Naive thymus-derived CD4-positive, alpha-beta T cell (primary cell): ENCODE measurements at regions of chr4 and their contacts with region 1.

Region 1: DNA sequence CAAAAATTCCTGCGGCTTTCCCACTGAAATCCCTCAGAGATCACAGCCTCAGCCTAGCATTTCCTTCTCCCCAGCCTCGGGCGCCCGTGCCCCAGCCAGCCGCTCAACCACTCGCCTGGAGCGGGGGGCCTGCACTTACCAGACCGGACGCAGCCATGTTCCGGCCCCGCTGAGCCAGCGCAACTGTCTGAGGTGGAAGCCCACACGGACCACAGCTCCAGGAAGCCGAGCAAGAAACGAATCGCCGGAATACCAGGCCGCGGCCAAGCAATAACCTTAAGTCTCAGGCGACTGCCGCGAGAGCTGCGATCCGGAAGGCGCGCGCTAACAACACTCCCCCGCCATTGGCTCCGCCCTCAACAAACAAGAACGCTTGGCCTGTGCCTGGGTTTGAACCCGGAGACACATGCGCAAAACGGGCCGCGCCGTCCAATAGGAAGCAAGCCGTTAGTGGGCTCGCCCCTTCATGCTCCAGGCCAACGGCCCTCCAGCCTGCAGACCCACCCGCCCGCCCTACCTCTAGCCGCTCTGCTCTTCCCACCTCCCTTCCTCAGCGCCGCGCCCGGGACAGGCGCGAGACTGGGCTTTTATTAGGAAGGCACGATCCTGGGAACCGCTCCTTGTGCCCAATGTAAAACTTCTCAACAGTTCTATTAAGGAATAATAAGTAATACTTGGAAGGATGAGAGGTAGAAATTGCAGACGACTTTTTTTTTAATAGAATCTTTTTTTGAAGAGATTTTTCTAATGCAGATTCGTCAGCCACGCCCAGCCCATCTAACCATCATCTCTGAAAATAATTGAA is at the start of gene CENPC:
- DNase-seq: peak; percentile 74 to 91 (median 87)
- ATAC-seq: peak; percentile 94
- H3K4me3 ChIP-seq: peak within 1 kb of the TSS; percentile 94
- H3K4me3 Mint-ChIP-seq: peak within 1 kb of the TSS; percentile 92 to 100 (median 98)
- H3K27ac ChIP-seq: peak within 1 kb of the TSS; percentile 98
- H3K27ac Mint-ChIP-seq: peak within 1 kb of the TSS; percentile 98 to 100 (median 100)
- H3K4me1 ChIP-seq: peaks cover 5 to 24% of the 10 kb centered on the region in 2 donors
- H3K4me1 Mint-ChIP-seq: peaks cover 16 to 60% (median 41%) of the 10 kb centered on the region in 7 donors
- H3K27me3 ChIP-seq: no peaks in the 10 kb centered on the region
- H3K27me3 Mint-ChIP-seq: no peaks in the 10 kb centered on the region
- total RNA-seq, gene CENPC: 33.9 to 89.7 (median 63.8) TPM

Region 2: GRCh38 chr4:67160394-67160793 is 385.0 kb before region 1 on chr4:
- CTCF ChIA-PET with region 1: no interaction called
- POLR2A ChIA-PET with region 1: no interaction called
- intact Hi-C with region 1: no loop called
- DNase-seq: no peak
- ATAC-seq: peak; percentile 74
- H3K4me3 ChIP-seq: no peak overlapping the region
- H3K4me3 Mint-ChIP-seq: no peak overlapping the region
- H3K27ac ChIP-seq: no peak overlapping the region
- H3K27ac Mint-ChIP-seq: no peak overlapping the region
- H3K4me1 ChIP-seq: no peaks in the 10 kb centered on the region
- H3K4me1 Mint-ChIP-seq: no peaks in the 10 kb centered on the region
- H3K27me3 ChIP-seq: no peaks in the 10 kb centered on the region
- H3K27me3 Mint-ChIP-seq: no peaks in the 10 kb centered on the region

Region 3: DNA sequence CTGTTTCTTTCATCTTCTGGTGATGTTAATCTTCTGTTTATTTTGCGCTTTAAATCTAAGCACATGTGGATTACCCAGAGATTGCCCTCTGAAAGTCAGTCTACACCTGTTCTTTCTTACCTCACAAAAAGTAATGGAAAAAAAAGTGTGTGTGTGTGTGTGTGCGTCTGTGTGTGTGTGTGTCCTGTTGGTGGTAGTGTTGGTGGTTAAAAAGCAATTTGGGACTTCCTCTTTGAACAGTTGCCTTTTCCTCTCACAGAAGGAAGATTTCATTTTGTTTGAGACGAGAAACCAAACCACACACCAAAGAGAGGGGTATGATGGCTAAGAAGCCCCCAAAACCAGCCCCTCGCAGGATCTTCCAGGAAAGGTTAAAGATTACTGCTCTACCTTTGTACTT is 13.1 kb after region 1 on chr4 and contains the start of gene STAP1:
- CTCF ChIA-PET with region 1: no interaction called
- POLR2A ChIA-PET with region 1: interaction called, 7 read pairs
- intact Hi-C with region 1: loop called (anchors 1 kb)
- DNase-seq: peak in 7 of 9 donors; percentile 54 to 80 (median 68)
- ATAC-seq: peak; percentile 79
- H3K4me3 ChIP-seq: peak within 1 kb of the TSS; percentile 54
- H3K4me3 Mint-ChIP-seq: peak within 1 kb of the TSS; percentile 74 to 93 (median 86)
- H3K27ac ChIP-seq: peak within 1 kb of the TSS; percentile 59
- H3K27ac Mint-ChIP-seq: peak within 1 kb of the TSS; percentile 82 to 95 (median 91)
- H3K4me1 ChIP-seq: peaks cover 3 to 12% of the 10 kb centered on the region in 2 donors
- H3K4me1 Mint-ChIP-seq: peaks cover 13 to 82% (median 52%) of the 10 kb centered on the region in 7 donors
- H3K27me3 ChIP-seq: no peaks in the 10 kb centered on the region
- H3K27me3 Mint-ChIP-seq: no peaks in the 10 kb centered on the region
- total RNA-seq, gene STAP1: 3.3 to 39.1 (median 15.0) TPM

Region 4: DNA sequence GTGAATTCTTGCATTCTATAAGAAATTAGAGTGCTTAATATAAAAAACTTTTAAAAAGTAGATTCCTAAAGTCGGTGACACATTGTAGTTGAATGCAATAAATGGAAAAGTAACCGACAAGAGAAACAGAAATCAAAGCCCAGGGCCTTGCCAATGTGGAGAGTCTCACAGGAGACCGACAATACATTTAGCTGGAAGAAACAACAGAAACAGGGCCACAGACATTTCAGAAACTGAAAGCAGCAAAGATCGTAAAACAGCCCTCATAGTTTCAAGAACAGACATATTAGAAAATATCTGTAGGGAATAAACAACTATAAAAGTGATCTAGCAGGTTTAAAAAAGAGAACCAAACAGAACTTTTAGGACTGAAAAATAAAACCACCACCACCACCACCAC is 62.6 kb after region 1 on chr4:
- CTCF ChIA-PET with region 1: no interaction called
- POLR2A ChIA-PET with region 1: no interaction called
- intact Hi-C with region 1: no loop called
- DNase-seq: no peak
- ATAC-seq: no peak
- H3K4me3 ChIP-seq: no peak overlapping the region
- H3K4me3 Mint-ChIP-seq: peak overlapping the region in 4 of 10 donors; percentile 5 to 19 (median 12)
- H3K27ac ChIP-seq: no peak overlapping the region
- H3K27ac Mint-ChIP-seq: peak overlapping the region in 3 of 9 donors; percentile 28 to 70 (median 31)
- H3K4me1 ChIP-seq: no peaks in the 10 kb centered on the region
- H3K4me1 Mint-ChIP-seq: peaks cover 0 to 7% (median 0%) of the 10 kb centered on the region in 7 donors
- H3K27me3 ChIP-seq: no peaks in the 10 kb centered on the region
- H3K27me3 Mint-ChIP-seq: no peaks in the 10 kb centered on the region

Region 5: GRCh38 chr4:67624939-67625338 is 79.5 kb after region 1 on chr4:
- CTCF ChIA-PET with region 1: interaction called, 11 read pairs
- POLR2A ChIA-PET with region 1: no interaction called
- intact Hi-C with region 1: loop called in 1 of 2 experiments (anchors 1 kb)
- DNase-seq: peak in 2 of 9 donors; percentile 6 to 8
- ATAC-seq: no peak
- H3K4me3 ChIP-seq: no peak overlapping the region
- H3K4me3 Mint-ChIP-seq: no peak overlapping the region
- H3K27ac ChIP-seq: no peak overlapping the region
- H3K27ac Mint-ChIP-seq: no peak overlapping the region
- H3K4me1 ChIP-seq: no peaks in the 10 kb centered on the region
- H3K4me1 Mint-ChIP-seq: no peaks in the 10 kb centered on the region
- H3K27me3 ChIP-seq: no peaks in the 10 kb centered on the region
- H3K27me3 Mint-ChIP-seq: no peaks in the 10 kb centered on the region

Region 6: GRCh38 chr4:67700738-67701516 is 155.5 kb after region 1 on chr4 and contains the start of gene UBA6:
- CTCF ChIA-PET with region 1: interaction called, 3 read pairs
- POLR2A ChIA-PET with region 1: interaction called, 29 read pairs
- intact Hi-C with region 1: loop called (anchors 1 kb)
- DNase-seq: peak; percentile 80 to 94 (median 91)
- ATAC-seq: peak; percentile 99
- H3K4me3 ChIP-seq: peak within 1 kb of the TSS; percentile 73
- H3K4me3 Mint-ChIP-seq: peak within 1 kb of the TSS; percentile 91 to 100 (median 97)
- H3K27ac ChIP-seq: peak within 1 kb of the TSS; percentile 85
- H3K27ac Mint-ChIP-seq: peak within 1 kb of the TSS; percentile 92 to 100 (median 96)
- H3K4me1 ChIP-seq: peaks cover 10 to 16% of the 10 kb centered on the region in 2 donors
- H3K4me1 Mint-ChIP-seq: peaks cover 47 to 86% (median 75%) of the 10 kb centered on the region in 7 donors
- H3K27me3 ChIP-seq: no peaks in the 10 kb centered on the region
- H3K27me3 Mint-ChIP-seq: no peaks in the 10 kb centered on the region
- total RNA-seq, gene UBA6: 35.5 to 84.4 (median 43.9) TPM

Region 7: DNA sequence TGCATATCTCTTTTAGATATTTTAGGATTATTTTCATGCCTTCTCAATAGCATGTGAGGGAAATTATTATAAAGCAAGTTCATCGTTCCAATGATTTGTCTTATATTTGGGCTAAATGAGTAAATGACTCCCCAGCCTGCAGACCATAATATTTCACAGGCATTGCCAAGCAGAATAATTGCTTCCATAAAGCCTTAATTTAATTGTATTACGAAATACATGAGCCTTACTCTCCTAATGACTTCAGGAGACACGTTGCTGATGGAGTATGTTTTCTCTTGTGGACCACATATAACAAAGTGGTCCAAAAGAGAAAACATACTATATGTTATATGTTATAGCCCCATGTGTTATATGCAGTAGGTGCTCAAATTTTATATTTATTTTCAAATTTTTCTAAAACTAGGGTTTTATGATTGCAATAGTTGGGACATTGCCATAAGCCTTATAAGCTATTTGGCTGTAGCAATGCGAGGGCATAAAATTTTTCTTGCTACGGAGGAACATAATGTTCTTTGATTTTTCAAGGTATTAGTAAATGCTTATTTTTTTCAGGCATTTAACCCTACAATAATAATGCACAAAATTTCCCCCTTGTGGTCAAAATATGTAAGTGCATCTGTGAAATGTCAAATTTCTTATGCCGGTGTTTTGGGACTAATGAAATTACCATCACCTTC is 364.6 kb after region 1 on chr4:
- CTCF ChIA-PET with region 1: interaction called, 3 read pairs
- POLR2A ChIA-PET with region 1: no interaction called
- intact Hi-C with region 1: loop called (anchors 1 kb)
- DNase-seq: peak in 5 of 9 donors; percentile 7 to 18 (median 13)
- ATAC-seq: no peak
- H3K4me3 ChIP-seq: no peak overlapping the region
- H3K4me3 Mint-ChIP-seq: no peak overlapping the region
- H3K27ac ChIP-seq: no peak overlapping the region
- H3K27ac Mint-ChIP-seq: no peak overlapping the region
- H3K4me1 ChIP-seq: no peaks in the 10 kb centered on the region
- H3K4me1 Mint-ChIP-seq: peaks cover 0 to 2% (median 0%) of the 10 kb centered on the region in 7 donors
- H3K27me3 ChIP-seq: no peaks in the 10 kb centered on the region
- H3K27me3 Mint-ChIP-seq: peaks cover 3 to 26% (median 13%) of the 10 kb centered on the region in 5 donors